Dendritic cell treated with granulocyte-macrophage colony-stimulating factor and Interleukin-4, amounts not matched to agents 40 ng/mL and 50 ng/mL, for 4 days (primary cell): ENCODE measurements at regions of chr12 and their contacts with region 1.

Region 1: DNA sequence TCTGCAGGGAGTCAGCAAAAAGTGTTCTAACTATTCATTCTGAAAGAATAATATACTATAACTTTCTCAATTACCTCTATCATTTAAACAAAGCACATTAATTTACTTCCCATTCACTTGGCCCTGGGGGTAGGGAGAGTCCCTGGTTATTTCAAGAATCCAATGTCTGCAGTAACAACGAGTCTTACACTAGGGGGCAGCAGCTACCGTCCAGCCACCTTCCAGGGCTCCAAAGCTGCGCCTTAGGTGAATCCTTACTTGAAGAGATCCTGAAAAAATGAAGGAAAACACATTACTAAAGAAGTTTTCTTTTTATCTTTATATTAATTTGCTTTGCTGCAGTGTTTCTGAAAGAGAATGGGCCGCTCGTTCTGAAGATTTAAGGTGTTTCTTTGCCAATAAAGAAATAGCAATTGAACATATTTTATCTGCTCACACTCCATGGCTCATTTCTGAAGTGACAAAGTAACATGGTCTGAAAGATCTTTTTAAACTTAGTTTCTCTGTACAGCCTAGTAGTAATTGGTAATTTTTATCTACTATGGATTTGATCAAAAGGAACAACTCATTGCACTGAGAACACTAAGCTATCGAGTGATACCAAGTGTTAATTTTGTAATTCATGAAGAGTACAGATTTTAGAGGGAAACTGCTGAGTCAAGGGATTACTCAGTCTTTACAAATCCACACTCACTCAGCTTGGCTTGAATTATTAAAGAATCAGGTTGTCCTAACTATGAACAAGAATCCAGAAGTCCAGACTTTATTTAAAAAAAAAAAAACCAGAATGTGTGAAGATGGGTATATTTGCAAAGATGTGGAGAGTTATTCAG is 27.6 kb downstream of the BHLHE41 start:
- H3K4me3 Mint-ChIP-seq: no peak overlapping the region
- H3K27ac Mint-ChIP-seq: no peak overlapping the region
- H3K4me1 Mint-ChIP-seq: no peaks in the 10 kb centered on the region
- H3K27me3 Mint-ChIP-seq: peaks cover 1% of the 10 kb centered on the region

Region 2: GRCh38 chr12:26523708-26524150 is 426.5 kb after region 1 on chr12:
- intact Hi-C with region 1: loop called (anchors 10 kb)
- H3K4me3 Mint-ChIP-seq: no peak overlapping the region
- H3K27ac Mint-ChIP-seq: no peak overlapping the region
- H3K4me1 Mint-ChIP-seq: peaks cover 19% of the 10 kb centered on the region
- H3K27me3 Mint-ChIP-seq: no peaks in the 10 kb centered on the region

Region 3: DNA sequence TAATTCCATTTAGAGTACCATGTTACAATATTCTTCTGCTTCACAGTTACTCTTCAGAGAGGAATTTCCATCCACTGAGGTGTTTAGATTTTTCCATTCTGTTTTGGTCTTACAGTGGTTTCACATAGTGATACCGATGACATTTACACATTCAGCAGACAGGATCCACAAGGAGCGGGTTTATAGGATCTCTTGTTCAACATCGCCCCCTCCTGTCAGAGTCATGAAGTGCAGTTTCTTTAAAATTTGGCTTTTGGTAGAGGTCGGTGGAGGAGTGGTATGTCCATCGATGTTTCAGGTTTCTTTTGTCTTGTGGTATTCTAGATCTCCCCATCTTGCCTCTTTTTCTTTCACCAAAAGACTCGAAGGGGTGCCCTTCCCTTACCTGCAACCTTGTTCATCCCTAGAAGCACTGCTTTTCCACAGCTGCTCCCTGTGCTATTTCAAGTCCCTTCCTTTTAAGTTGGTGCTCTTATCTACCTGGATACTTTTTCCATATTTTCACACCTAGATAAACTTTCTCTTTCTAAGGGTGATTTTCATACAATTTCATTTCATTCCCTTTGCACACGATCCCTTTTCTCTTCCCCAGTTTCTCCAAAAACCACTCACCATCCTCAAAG is 554.4 kb after region 1 on chr12:
- intact Hi-C with region 1: loop called (anchors 5 kb)
- H3K4me3 Mint-ChIP-seq: no peak overlapping the region
- H3K27ac Mint-ChIP-seq: no peak overlapping the region
- H3K4me1 Mint-ChIP-seq: peaks cover 8% of the 10 kb centered on the region
- H3K27me3 Mint-ChIP-seq: no peaks in the 10 kb centered on the region